ENCODE measurements at regions of chr2 and their contacts with region 1.

Region 1: DNA sequence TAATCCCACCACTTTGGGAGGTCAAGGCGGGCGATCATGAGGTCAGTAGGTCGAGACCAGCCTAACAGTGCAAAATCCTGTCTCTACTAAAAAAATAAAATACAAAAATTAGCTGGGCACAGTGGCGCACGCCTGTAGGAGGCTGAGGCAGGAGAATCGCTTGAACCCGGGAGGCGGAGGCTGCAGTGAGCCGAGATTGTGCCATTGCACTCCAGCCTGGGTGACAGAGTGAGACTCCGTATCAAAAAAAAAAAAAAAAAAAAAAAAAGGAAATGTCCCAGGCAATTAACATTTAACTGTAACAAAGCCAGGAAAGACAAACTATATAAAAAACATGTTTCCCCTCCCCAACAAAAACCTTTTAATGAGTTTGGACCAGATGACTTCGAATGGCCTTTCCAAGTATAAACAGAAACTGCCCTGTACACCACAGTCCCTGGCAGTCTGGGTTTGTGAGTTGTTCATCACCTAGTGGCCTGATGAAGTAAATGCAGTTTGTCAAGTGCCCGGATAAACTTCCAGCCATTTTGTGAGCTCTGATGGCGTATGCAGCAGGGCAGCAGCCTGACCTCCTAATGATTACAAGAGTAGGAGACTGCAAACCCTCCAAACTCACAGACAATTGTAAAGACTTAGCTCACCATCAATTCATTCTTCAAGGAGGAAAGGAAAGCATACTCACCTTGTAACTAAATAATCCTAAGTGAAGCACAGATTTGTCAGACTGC is 16.6 kb upstream of the PCBP1 start:
- DNase-seq: peak; percentile 71 to 78
- ATAC-seq: peak; percentile 86
- H3K4me3 ChIP-seq: peak overlapping the region; percentile 6 to 30 (median 19)
- H3K27ac ChIP-seq: peak overlapping the region; percentile 84 to 94 (median 88)
- H3K4me1 ChIP-seq: peaks cover 29 to 35% of the 10 kb centered on the region in 2 donors
- H3K27me3 ChIP-seq: no peaks in the 10 kb centered on the region
- CTCF ChIP-seq: peak; percentile 84 to 94 (median 87)
- POLR2A ChIP-seq: no peak

Region 2: GRCh38 chr2:70009762-70010575 is 60.7 kb before region 1 on chr2:
- in situ Hi-C with region 1: no loop called
- intact Hi-C with region 1: loop called (anchors 5 kb)
- DNase-seq: no peak
- ATAC-seq: no peak
- H3K4me3 ChIP-seq: no peak overlapping the region
- H3K27ac ChIP-seq: no peak overlapping the region
- H3K4me1 ChIP-seq: peaks cover 15 to 16% of the 10 kb centered on the region in 2 donors
- H3K27me3 ChIP-seq: no peaks in the 10 kb centered on the region
- CTCF ChIP-seq: no peak
- POLR2A ChIP-seq: no peak

Region 3: GRCh38 chr2:70132244-70133126 is 61.8 kb after region 1 on chr2:
- in situ Hi-C with region 1: loop called in 1 of 4 experiments (anchors 10 kb)
- intact Hi-C with region 1: no loop called
- DNase-seq: peak; percentile 81 to 89
- ATAC-seq: peak; percentile 86 to 88
- H3K4me3 ChIP-seq: peak overlapping the region; percentile 31 to 47 (median 44)
- H3K27ac ChIP-seq: peak overlapping the region; percentile 86 to 97 (median 91)
- H3K4me1 ChIP-seq: peaks cover 38 to 49% of the 10 kb centered on the region in 2 donors
- H3K27me3 ChIP-seq: no peaks in the 10 kb centered on the region
- CTCF ChIP-seq: peak in 1 of 5 experiments; percentile 14
- POLR2A ChIP-seq: peak in 1 of 2 donors; percentile 57